ENCODE measurements at regions of chr2 and their contacts with region 1.

Region 1: GRCh38 chr2:219402665-219403515 is 15.2 kb upstream of the DNPEP start:
- DNase-seq: peak; percentile 87
- H3K4me3 ChIP-seq: no peak overlapping the region
- H3K27ac ChIP-seq: no peak overlapping the region
- H3K4me1 ChIP-seq: peaks cover 28% of the 10 kb centered on the region
- H3K27me3 ChIP-seq: no peaks in the 10 kb centered on the region
- CTCF ChIP-seq: peak; percentile 77 to 90 (median 87)
- POLR2A ChIP-seq: no peak

Region 2: GRCh38 chr2:219010162-219010756 is 392.6 kb before region 1 on chr2:
- intact Hi-C with region 1: no loop called
- DNase-seq: no peak
- H3K4me3 ChIP-seq: no peak overlapping the region
- H3K27ac ChIP-seq: no peak overlapping the region
- H3K4me1 ChIP-seq: no peaks in the 10 kb centered on the region
- H3K27me3 ChIP-seq: no peaks in the 10 kb centered on the region
- CTCF ChIP-seq: peak in 1 of 3 experiments; percentile 11
- POLR2A ChIP-seq: no peak

Region 3: GRCh38 chr2:219344751-219345430 is 58.0 kb before region 1 on chr2:
- intact Hi-C with region 1: no loop called
- DNase-seq: peak; percentile 61
- H3K4me3 ChIP-seq: no peak overlapping the region
- H3K27ac ChIP-seq: no peak overlapping the region
- H3K4me1 ChIP-seq: no peaks in the 10 kb centered on the region
- H3K27me3 ChIP-seq: no peaks in the 10 kb centered on the region
- CTCF ChIP-seq: no peak
- POLR2A ChIP-seq: no peak

Region 4: GRCh38 chr2:219530048-219530963 is 127.4 kb after region 1 on chr2:
- intact Hi-C with region 1: loop called (anchors 5 kb)
- DNase-seq: peak; percentile 88
- H3K4me3 ChIP-seq: peak overlapping the region in 1 of 2 donors; percentile 5
- H3K27ac ChIP-seq: no peak overlapping the region
- H3K4me1 ChIP-seq: peaks cover 4% of the 10 kb centered on the region
- H3K27me3 ChIP-seq: no peaks in the 10 kb centered on the region
- CTCF ChIP-seq: peak; percentile 93 to 98 (median 96)
- POLR2A ChIP-seq: no peak

Region 5: DNA sequence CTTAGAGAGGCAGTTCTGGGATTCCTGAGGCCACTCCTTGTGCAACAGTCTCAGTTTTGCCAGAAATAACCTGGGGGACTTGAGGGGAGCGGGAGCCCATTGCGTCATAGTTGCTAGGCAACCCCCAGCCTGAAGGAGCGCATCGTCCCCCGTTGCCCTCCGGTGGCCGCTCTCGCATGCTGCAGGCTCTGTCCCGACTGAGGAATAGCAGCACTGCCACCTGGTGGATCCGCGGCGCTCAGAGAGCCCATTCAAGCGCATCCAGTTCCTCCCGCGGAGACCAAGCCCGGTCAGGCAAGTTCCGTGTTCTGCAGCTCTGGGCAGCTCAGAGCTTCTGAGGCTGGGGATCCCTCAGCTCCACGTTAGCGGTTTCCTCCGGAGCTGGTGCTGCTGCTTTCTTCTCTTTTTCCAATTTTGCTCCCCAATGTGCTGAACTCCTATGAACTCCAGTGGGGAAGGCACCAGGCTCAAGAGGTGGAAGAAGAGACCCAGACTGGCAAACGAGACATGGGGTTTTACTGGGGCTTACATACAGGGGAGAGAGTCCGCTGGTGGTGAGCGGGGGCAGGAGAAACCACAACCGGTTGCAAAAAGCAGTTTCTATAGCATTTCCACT is 239.7 kb after region 1 on chr2:
- intact Hi-C with region 1: loop called (anchors 5 kb)
- DNase-seq: peak; percentile 99
- H3K4me3 ChIP-seq: no peak overlapping the region
- H3K27ac ChIP-seq: peak overlapping the region in 1 of 2 donors; percentile 76
- H3K4me1 ChIP-seq: peaks cover 53% of the 10 kb centered on the region
- H3K27me3 ChIP-seq: no peaks in the 10 kb centered on the region
- CTCF ChIP-seq: peak; percentile 95 to 100 (median 100)
- POLR2A ChIP-seq: no peak

Measured in testis (tissue), 5 donors.